ENCODE measurements at regions of chr19 and their contacts with region 1.

Region 1: GRCh38 chr19:10061717-10062310 is 24.3 kb upstream of the SHFL start:
- DNase-seq: no peak
- ATAC-seq: no peak
- H3K4me3 ChIP-seq: no peak overlapping the region
- H3K4me3 Mint-ChIP-seq: no peak overlapping the region
- H3K27ac ChIP-seq: no peak overlapping the region
- H3K27ac Mint-ChIP-seq: no peak overlapping the region
- H3K4me1 ChIP-seq: no peaks in the 10 kb centered on the region
- H3K4me1 Mint-ChIP-seq: no peaks in the 10 kb centered on the region
- H3K27me3 ChIP-seq: peaks cover 0 to 58% of the 10 kb centered on the region in 2 experiments
- H3K27me3 Mint-ChIP-seq: peaks cover 25 to 31% of the 10 kb centered on the region in 2 donors

Region 2: DNA sequence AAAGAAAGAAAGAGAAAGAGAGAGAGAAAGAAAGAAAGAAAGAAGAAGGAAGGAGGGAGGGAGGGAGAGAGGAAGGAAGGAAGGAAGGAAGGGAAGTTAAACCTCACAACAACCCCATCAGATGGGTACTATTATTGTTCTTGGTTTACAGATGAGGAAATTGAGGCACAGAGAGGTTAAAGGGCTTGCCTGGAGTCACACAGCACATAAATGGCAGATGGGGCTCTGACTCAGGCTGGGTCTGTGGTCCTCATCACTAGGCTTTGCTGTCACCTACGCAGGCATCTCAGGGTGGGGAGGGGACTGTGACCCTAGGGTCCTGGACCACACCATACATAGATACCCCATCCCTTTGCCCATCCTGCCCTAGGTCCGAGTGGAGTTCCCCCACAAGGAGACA is 12.2 kb before region 1 on chr19:
- CTCF ChIA-PET with region 1: no interaction called
- POLR2A ChIA-PET with region 1: interaction called in 1 of 2 experiments, 18 read pairs
- DNase-seq: no peak
- ATAC-seq: no peak
- H3K4me3 ChIP-seq: no peak overlapping the region
- H3K4me3 Mint-ChIP-seq: no peak overlapping the region
- H3K27ac ChIP-seq: no peak overlapping the region
- H3K27ac Mint-ChIP-seq: no peak overlapping the region
- H3K4me1 ChIP-seq: no peaks in the 10 kb centered on the region
- H3K4me1 Mint-ChIP-seq: peaks cover 0 to 6% (median 0%) of the 10 kb centered on the region in 3 donors
- H3K27me3 ChIP-seq: peaks cover 0 to 21% of the 10 kb centered on the region in 2 experiments
- H3K27me3 Mint-ChIP-seq: peaks cover 13 to 17% of the 10 kb centered on the region in 2 donors